ENCODE measurements at regions of chr2 and their contacts with region 1.

Region 1: DNA sequence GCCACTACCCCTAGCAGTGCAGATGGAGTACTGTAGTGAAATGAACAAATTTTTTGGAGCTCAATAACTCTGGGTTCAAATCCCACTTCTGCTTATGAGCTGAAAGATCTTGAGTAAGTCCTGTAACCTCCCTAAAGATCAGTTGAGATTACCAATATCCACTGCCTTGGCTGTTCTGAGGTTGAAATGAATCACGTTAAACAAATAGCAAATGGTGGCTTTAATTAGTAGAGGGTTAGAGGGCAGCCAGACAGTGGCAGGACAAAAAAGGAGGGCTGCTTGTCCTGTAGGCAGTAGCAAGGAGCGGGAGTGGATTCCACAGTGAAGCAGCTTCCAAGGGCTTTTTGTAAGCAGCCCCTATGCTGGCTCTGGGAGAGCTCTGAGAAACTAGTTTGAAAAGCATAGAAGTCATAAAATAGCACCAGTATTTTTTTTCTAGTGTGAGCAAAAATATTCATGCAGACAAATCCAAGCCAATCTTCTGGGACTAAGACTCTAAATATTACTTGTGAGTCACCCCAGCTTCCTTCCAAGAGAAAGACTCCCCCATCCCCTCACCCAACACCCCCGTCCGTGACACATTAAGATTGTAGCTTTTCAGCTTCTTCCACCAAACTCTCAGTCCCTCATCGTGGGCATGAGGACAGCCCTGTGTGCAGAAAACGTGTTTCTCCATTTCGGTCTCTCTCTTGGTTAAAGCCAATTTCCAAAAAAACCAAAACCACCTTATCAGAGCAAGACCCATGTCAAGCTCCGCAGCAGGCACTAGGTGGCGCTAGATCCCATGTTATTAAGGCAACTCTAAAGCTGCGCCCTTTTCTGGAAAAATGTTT is 123.5 kb upstream of the LGALSL start:
- DNase-seq: peak; percentile 61 to 80 (median 73)
- ATAC-seq: peak; percentile 54
- H3K4me3 ChIP-seq: no peak overlapping the region
- H3K4me3 Mint-ChIP-seq: peak overlapping the region in 9 of 10 donors; percentile 53 to 86 (median 68)
- H3K27ac ChIP-seq: no peak overlapping the region
- H3K27ac Mint-ChIP-seq: peak overlapping the region in 8 of 9 donors; percentile 9 to 94 (median 84)
- H3K4me1 ChIP-seq: peaks cover 27 to 29% of the 10 kb centered on the region in 2 donors
- H3K4me1 Mint-ChIP-seq: peaks cover 17 to 52% (median 36%) of the 10 kb centered on the region in 7 donors
- H3K27me3 ChIP-seq: no peaks in the 10 kb centered on the region
- H3K27me3 Mint-ChIP-seq: peaks cover 0 to 3% (median 0%) of the 10 kb centered on the region in 5 donors

Region 2: DNA sequence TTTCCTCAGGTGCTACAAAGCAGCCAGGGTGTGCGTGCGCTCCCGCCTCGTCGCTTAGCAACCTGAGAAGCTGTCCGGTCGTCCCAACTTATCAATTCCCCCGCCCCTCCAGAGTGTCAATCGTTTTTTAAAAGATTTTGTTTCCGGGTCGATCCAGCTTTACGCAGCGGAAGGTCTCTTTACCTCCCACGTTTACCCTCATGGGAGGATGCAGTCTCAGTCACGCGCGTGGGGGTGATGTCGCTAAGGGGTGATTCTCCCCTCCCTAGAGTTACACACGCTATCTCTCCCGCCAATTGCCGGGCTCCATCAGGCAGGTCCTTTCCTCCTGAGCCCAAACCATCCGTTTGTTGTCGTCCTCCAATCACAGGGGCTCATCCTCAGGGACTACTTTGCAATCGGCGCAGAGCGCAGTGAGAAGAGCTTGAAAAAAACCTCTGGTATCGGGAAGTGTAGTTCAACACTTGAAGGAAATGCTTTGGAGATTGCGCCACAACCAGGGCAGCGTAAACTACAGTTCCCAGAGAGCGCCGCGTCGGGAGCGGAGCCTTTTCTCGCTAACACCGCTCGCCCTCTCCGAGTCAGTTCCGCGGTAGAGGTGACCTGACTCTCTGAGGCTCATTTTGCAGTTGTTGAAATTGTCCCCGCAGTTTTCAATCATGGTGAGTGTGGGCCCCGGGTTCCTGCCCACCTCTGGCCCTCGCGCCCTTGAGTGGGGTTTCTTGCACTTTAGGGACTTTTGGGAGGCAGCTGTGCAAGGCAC is 741.9 kb before region 1 on chr2 and contains the starts of genes MDH1 and WDPCP:
- CTCF ChIA-PET with region 1: no interaction called
- POLR2A ChIA-PET with region 1: no interaction called
- intact Hi-C with region 1: loop called (anchors 1 to 2 kb)
- DNase-seq: peak; percentile 74 to 99 (median 96)
- ATAC-seq: peak; percentile 89
- H3K4me3 ChIP-seq: peak within 1 kb of the TSS; percentile 91
- H3K4me3 Mint-ChIP-seq: peak within 1 kb of the TSS; percentile 89 to 99 (median 94)
- H3K27ac ChIP-seq: peak within 1 kb of the TSS; percentile 89
- H3K27ac Mint-ChIP-seq: peak within 1 kb of the TSS; percentile 89 to 99 (median 95)
- H3K4me1 ChIP-seq: peaks cover 16 to 23% of the 10 kb centered on the region in 2 donors
- H3K4me1 Mint-ChIP-seq: peaks cover 24 to 63% (median 45%) of the 10 kb centered on the region in 7 donors
- H3K27me3 ChIP-seq: no peaks in the 10 kb centered on the region
- H3K27me3 Mint-ChIP-seq: no peaks in the 10 kb centered on the region
- total RNA-seq, gene MDH1: 76.5 to 180 (median 84.2) TPM
- total RNA-seq, gene WDPCP: 7.6 to 19.2 (median 16.1) TPM

Region 3: DNA sequence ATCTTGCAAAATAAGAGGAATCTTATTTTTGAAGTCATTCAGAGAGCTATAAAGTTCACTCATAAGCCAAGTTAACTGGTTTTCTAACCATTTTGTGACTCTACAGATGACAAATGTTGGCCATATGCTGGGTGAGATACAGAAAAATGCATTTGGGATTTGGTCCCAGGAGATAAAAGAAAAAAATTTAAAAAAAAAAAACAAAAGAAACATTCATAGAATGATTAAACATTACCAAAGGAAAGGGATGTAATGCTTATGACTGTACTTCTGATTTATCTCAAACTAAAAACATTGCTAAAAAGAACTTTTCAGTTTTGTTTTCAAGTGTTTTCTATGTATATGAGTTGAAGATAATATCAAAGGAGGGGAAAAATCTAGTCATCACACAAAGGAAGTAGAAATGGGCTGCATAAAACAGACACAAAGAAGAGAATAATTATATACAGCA is 229.3 kb before region 1 on chr2:
- CTCF ChIA-PET with region 1: interaction called, 15 read pairs
- POLR2A ChIA-PET with region 1: interaction called, 5 read pairs
- intact Hi-C with region 1: loop called in 1 of 2 experiments (anchors 1 kb)
- DNase-seq: peak in 6 of 9 donors; percentile 10 to 57 (median 44)
- ATAC-seq: peak; percentile 56
- H3K4me3 ChIP-seq: no peak overlapping the region
- H3K4me3 Mint-ChIP-seq: peak overlapping the region in 9 of 10 donors; percentile 18 to 83 (median 55)
- H3K27ac ChIP-seq: peak overlapping the region; percentile 33
- H3K27ac Mint-ChIP-seq: peak overlapping the region; percentile 44 to 88 (median 80)
- H3K4me1 ChIP-seq: peaks cover 0 to 16% of the 10 kb centered on the region in 2 donors
- H3K4me1 Mint-ChIP-seq: peaks cover 14 to 66% (median 60%) of the 10 kb centered on the region in 7 donors
- H3K27me3 ChIP-seq: no peaks in the 10 kb centered on the region
- H3K27me3 Mint-ChIP-seq: no peaks in the 10 kb centered on the region

Region 4: DNA sequence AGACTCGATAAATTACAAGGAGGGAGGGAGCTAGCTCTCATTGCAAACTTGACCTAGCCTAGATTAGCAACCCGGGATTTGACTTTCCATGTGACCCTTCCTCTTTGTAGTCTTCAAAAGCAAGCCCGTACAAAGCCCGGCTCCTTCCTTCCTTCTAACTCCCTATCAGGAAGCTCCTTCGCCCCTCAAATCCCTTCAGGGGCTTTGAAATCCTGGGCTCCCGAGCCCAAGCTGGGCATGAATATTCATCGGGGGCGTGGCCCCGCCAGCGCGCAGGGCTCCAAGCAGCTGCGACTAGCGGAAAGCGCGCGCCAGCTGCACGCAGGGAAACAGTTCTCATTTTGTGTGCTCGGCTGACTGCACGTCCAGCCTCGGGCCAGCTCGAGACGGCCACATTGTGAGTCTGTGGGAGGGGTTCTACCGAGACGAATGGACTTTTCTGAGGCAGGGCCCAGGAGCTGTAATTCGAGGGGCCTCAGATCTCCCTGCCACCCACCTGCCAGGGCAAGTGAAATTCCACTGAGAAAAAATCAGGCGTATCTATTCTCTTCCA is 102.3 kb before region 1 on chr2:
- CTCF ChIA-PET with region 1: interaction called, 9 read pairs
- POLR2A ChIA-PET with region 1: interaction called, 18 read pairs
- intact Hi-C with region 1: loop called in 1 of 2 experiments (anchors 1 kb)
- DNase-seq: peak in 8 of 9 donors; percentile 38 to 61 (median 57)
- ATAC-seq: peak; percentile 94
- H3K4me3 ChIP-seq: peak overlapping the region; percentile 48
- H3K4me3 Mint-ChIP-seq: peak overlapping the region; percentile 86 to 100 (median 95)
- H3K27ac ChIP-seq: peak overlapping the region; percentile 78
- H3K27ac Mint-ChIP-seq: peak overlapping the region; percentile 83 to 99 (median 95)
- H3K4me1 ChIP-seq: peaks cover 0 to 15% of the 10 kb centered on the region in 2 donors
- H3K4me1 Mint-ChIP-seq: peaks cover 16 to 45% (median 38%) of the 10 kb centered on the region in 7 donors
- H3K27me3 ChIP-seq: no peaks in the 10 kb centered on the region
- H3K27me3 Mint-ChIP-seq: no peaks in the 10 kb centered on the region

Region 5: GRCh38 chr2:64488050-64488974 is 157.8 kb after region 1 on chr2:
- CTCF ChIA-PET with region 1: interaction called, 94 read pairs
- POLR2A ChIA-PET with region 1: no interaction called
- intact Hi-C with region 1: loop called (anchors 1 kb)
- DNase-seq: peak; percentile 49 to 77 (median 67)
- ATAC-seq: peak; percentile 89
- H3K4me3 ChIP-seq: no peak overlapping the region
- H3K4me3 Mint-ChIP-seq: no peak overlapping the region
- H3K27ac ChIP-seq: no peak overlapping the region
- H3K27ac Mint-ChIP-seq: no peak overlapping the region
- H3K4me1 ChIP-seq: no peaks in the 10 kb centered on the region
- H3K4me1 Mint-ChIP-seq: peaks cover 3 to 16% (median 9%) of the 10 kb centered on the region in 7 donors
- H3K27me3 ChIP-seq: no peaks in the 10 kb centered on the region
- H3K27me3 Mint-ChIP-seq: peaks cover 0 to 37% (median 0%) of the 10 kb centered on the region in 5 donors

Region 6: GRCh38 chr2:64743739-64744330 is 413.3 kb after region 1 on chr2:
- CTCF ChIA-PET with region 1: no interaction called
- POLR2A ChIA-PET with region 1: no interaction called
- intact Hi-C with region 1: no loop called
- DNase-seq: no peak
- ATAC-seq: no peak
- H3K4me3 ChIP-seq: no peak overlapping the region
- H3K4me3 Mint-ChIP-seq: no peak overlapping the region
- H3K27ac ChIP-seq: no peak overlapping the region
- H3K27ac Mint-ChIP-seq: peak overlapping the region in 1 of 9 donors; percentile 57
- H3K4me1 ChIP-seq: peaks cover 0 to 2% of the 10 kb centered on the region in 2 donors
- H3K4me1 Mint-ChIP-seq: peaks cover 0 to 19% (median 10%) of the 10 kb centered on the region in 7 donors
- H3K27me3 ChIP-seq: no peaks in the 10 kb centered on the region
- H3K27me3 Mint-ChIP-seq: no peaks in the 10 kb centered on the region

Region 7: DNA sequence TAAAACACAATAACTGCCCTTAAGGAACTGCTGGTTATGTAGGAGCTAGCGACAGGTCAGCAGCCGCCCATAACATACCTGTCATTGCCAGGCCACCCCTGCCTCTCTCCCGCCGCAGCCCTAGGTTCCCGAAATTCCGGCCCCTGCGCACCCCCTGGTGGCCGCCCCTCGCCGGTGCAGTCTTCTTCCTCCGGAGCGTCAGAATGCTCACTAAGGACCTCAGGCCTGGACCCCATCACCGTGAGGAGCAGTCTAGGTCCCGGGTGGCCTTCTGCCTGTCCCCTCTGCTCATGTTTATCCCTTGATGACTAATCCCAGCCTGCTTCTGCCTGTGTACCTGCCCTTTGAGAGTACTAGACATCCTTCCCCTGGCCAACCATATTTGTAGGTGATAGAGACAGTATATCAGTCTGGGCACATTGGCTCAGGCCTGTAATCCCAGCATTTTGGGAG is 543.0 kb after region 1 on chr2:
- CTCF ChIA-PET with region 1: interaction called, 11 read pairs
- POLR2A ChIA-PET with region 1: no interaction called
- intact Hi-C with region 1: loop called (anchors 1 kb)
- DNase-seq: peak; percentile 51 to 87 (median 71)
- ATAC-seq: peak; percentile 93
- H3K4me3 ChIP-seq: no peak overlapping the region
- H3K4me3 Mint-ChIP-seq: peak overlapping the region in 6 of 10 donors; percentile 25 to 64 (median 46)
- H3K27ac ChIP-seq: no peak overlapping the region
- H3K27ac Mint-ChIP-seq: peak overlapping the region in 2 of 9 donors; percentile 46 to 63
- H3K4me1 ChIP-seq: peaks cover 0 to 3% of the 10 kb centered on the region in 2 donors
- H3K4me1 Mint-ChIP-seq: peaks cover 0 to 7% (median 7%) of the 10 kb centered on the region in 7 donors
- H3K27me3 ChIP-seq: no peaks in the 10 kb centered on the region
- H3K27me3 Mint-ChIP-seq: peaks cover 0 to 24% (median 4%) of the 10 kb centered on the region in 5 donors

Region 8: GRCh38 chr2:65432227-65433190 is 1102.0 kb after region 1 on chr2 and contains the start of gene SPRED2:
- CTCF ChIA-PET with region 1: no interaction called
- POLR2A ChIA-PET with region 1: no interaction called
- intact Hi-C with region 1: loop called in 1 of 2 experiments (anchors 5 kb)
- DNase-seq: peak; percentile 36 to 75 (median 51)
- ATAC-seq: peak; percentile 58
- H3K4me3 ChIP-seq: peak within 1 kb of the TSS; percentile 75
- H3K4me3 Mint-ChIP-seq: peak within 1 kb of the TSS; percentile 89 to 95 (median 90)
- H3K27ac ChIP-seq: peak within 1 kb of the TSS; percentile 8
- H3K27ac Mint-ChIP-seq: peak within 1 kb of the TSS in 5 of 9 donors; percentile 31 to 90 (median 69)
- H3K4me1 ChIP-seq: peaks cover 8 to 11% of the 10 kb centered on the region in 2 donors
- H3K4me1 Mint-ChIP-seq: peaks cover 7 to 33% (median 16%) of the 10 kb centered on the region in 7 donors
- H3K27me3 ChIP-seq: peaks cover 0 to 22% of the 10 kb centered on the region in 2 donors
- H3K27me3 Mint-ChIP-seq: peaks cover 27 to 67% (median 36%) of the 10 kb centered on the region in 5 donors
- total RNA-seq, gene SPRED2: 0.34 to 7.9 (median 1.7) TPM